ENCODE measurements at regions of chr20 and their contacts with region 1.

Region 1: GRCh38 chr20:33933469-33933909 is 60.2 kb upstream of the RALY start:
- DNase-seq: peak; percentile 47 to 94 (median 72)

Region 2: DNA sequence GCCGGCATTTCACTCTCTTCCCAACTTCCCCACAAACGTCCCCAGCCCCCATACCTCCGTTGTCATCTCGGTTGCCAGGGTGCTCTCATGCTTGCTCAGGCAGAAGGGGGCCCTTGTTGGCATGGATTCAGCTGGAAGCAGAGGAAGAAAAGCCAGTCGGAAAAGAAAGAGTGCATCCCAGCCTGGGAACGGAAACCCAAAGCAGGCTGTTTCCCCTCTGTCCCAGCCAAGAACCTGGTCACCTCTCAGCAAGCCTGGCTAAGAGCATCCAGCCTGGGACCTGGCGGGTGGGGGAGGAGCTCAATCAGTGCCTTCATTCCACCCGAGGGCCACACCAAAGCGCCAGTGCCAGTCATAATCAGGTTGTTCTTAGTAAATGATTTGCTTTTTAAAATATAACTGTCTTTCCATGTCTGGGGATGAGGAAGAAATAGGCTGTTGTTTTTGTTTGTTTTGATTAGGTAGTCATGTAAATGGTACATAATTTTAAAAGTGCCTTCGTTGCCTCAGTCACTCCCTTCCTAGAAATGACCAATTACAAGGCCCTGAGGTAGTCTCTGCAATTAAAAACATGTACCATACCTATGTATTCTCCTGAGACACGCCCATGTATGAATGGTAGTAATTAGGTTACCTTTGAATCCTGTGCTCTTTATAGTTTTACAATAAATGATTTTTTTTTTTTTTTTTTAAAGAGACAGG is 101.2 kb before region 1 on chr20:
- intact Hi-C with region 1: no loop called
- DNase-seq: peak in 6 of 10 donors; percentile 18 to 83 (median 32)

Region 3: GRCh38 chr20:33947709-33948295 is 14.3 kb after region 1 on chr20:
- intact Hi-C with region 1: no loop called
- DNase-seq: no peak

Region 4: DNA sequence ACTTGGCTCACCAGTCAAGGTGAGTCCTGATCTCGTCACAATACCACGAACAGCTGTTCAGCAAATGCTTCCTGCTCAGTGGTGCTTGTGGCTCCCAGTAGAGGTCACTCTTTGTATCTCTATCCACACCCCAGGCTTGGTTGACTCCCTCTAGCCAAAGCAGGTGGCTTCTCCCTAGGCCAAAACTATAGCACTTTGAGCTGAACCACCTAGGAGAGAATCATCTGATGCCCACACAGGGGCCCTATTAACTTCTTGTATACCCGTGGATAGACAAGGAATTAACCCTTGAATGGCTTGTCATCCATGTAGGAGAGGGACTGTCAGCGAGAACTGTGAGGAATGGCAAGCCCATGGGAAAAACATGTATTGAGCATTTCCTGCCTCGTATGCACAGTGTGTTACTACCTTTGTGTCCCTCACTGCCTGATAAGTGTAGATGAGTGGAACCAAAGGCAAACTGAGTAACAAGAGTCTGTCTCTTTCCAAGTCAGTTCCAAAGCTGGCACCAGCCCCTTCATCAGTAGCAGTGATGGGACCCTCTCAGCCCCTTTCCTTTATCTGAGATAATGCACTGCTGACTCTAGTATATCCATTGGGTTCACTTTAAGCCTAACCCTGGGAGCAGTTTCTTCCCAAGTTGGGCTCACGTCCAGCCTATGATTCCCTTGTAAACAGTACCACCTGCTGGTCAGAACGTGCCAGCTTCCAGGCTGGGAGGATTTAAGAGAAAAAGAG is 136.0 kb after region 1 on chr20:
- intact Hi-C with region 1: loop called (anchors 1 kb)
- DNase-seq: peak; percentile 50 to 97 (median 80)

Region 5: GRCh38 chr20:34129518-34130162 is 196.2 kb after region 1 on chr20:
- intact Hi-C with region 1: loop called (anchors 5 kb)
- DNase-seq: peak in 8 of 10 donors; percentile 28 to 91 (median 49)

Measured in posterior cingulate gyrus (tissue), 11 donors.